MCF 10A (cell line): ENCODE measurements at regions of chr5 and their contacts with region 1.

Region 1: DNA sequence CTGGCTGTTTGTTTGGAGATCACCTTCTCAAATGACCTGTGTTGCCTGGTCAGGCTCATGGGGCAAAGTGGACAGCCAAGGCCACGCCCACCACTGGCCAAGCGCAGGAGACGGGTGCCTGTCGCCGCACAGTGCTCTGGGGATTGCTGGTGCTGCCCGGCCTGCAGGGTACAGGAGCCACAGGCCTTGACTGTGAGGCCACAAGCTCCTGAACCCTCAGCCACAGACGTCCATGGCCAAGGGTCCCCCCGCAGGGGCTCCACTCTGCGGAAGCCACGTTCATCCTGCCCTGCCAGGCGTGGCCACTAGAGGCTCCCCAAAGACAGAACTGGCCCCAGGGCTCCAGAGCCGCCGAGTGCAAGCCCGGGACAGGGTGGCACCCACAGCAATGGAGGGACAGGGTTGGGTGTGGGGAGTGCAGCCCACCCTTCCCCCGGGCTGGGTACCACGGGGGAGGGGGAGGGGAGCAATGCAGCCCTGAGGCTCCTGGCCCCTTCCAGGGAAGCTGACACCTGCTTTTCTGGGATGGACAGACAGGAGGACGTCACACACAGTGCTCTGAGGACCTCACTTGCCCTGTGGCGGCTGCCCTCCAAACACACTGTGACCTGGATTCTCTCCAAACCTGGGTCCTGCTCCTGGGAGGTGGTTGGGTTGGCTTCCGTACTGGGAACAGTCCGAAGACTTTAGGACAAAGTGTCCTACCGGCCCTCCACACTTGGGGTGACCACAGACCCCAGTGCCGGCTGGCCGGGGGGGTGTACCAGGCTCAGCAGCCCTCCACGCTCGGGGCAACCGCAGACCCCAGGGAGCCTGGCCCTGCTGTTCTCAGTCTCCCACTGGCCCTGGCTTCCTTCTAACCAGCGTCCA is 21.5 kb downstream of the TPPP start:
- DNase-seq: peak; percentile 67
- H3K4me3 Mint-ChIP-seq: no peak overlapping the region
- H3K27ac Mint-ChIP-seq: no peak overlapping the region
- H3K4me1 Mint-ChIP-seq: peaks cover 13% of the 10 kb centered on the region
- H3K27me3 Mint-ChIP-seq: no peaks in the 10 kb centered on the region
- CTCF ChIP-seq: peak; percentile 95

Region 2: DNA sequence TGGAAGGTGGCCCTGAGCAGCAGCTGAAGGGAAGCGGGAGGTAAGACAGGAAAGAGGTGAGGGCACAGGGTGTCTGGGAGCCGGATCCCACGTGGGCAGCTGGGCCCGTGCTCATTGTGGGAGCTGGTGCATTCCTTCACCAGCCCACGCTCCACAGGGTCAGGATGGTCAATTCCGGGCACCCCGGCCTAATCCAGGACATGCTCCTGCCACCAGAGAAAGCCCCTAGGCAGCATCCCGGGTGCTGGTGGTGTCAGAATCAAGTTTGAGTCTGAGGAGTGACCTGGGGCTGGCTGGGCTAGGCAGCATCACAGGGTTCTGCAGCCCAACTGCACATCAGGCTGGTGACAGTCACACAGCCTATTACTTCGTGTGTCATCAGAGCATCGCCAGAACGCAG is 407.3 kb before region 1 on chr5:
- CTCF ChIA-PET with region 1: no interaction called
- POLR2A ChIA-PET with region 1: no interaction called
- intact Hi-C with region 1: no loop called
- DNase-seq: no peak
- H3K4me3 Mint-ChIP-seq: no peak overlapping the region
- H3K27ac Mint-ChIP-seq: peak overlapping the region; percentile 89
- H3K4me1 Mint-ChIP-seq: peaks cover 10% of the 10 kb centered on the region
- H3K27me3 Mint-ChIP-seq: no peaks in the 10 kb centered on the region
- CTCF ChIP-seq: no peak

Region 3: DNA sequence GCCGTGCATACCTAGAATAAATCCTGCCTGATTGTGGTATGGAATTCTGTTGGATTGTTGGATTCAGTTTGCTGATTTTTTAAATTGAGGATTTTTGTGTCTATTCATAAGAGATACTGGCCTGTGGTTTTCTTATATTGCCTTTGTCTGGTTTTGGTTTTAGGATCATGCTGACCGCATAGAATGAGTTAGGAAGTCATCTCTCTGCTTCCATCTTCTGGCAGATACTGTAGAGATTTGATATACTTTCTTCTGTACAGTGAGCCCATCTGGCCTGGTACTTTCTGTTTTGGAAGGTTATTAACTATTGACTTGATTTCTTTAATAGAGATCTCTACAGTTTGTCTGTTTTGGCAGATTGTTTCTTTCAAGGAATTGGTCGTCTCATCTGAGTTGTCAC is 44.8 kb before region 1 on chr5:
- CTCF ChIA-PET with region 1: no interaction called
- POLR2A ChIA-PET with region 1: no interaction called
- intact Hi-C with region 1: no loop called
- DNase-seq: no peak
- H3K4me3 Mint-ChIP-seq: no peak overlapping the region
- H3K27ac Mint-ChIP-seq: no peak overlapping the region
- H3K4me1 Mint-ChIP-seq: no peaks in the 10 kb centered on the region
- H3K27me3 Mint-ChIP-seq: no peaks in the 10 kb centered on the region
- CTCF ChIP-seq: no peak

Region 4: GRCh38 chr5:657570-657969 is 14.1 kb before region 1 on chr5:
- CTCF ChIA-PET with region 1: interaction called, 10 read pairs
- POLR2A ChIA-PET with region 1: no interaction called
- intact Hi-C with region 1: no loop called
- DNase-seq: peak; percentile 84
- H3K4me3 Mint-ChIP-seq: no peak overlapping the region
- H3K27ac Mint-ChIP-seq: peak overlapping the region; percentile 69
- H3K4me1 Mint-ChIP-seq: peaks cover 9% of the 10 kb centered on the region
- H3K27me3 Mint-ChIP-seq: no peaks in the 10 kb centered on the region
- CTCF ChIP-seq: no peak

Region 5: GRCh38 chr5:849651-850301 is 178.1 kb after region 1 on chr5:
- CTCF ChIA-PET with region 1: no interaction called
- POLR2A ChIA-PET with region 1: interaction called, 4 read pairs
- intact Hi-C with region 1: loop called (anchors 10 kb)
- DNase-seq: no peak
- H3K4me3 Mint-ChIP-seq: no peak overlapping the region
- H3K27ac Mint-ChIP-seq: no peak overlapping the region
- H3K4me1 Mint-ChIP-seq: no peaks in the 10 kb centered on the region
- H3K27me3 Mint-ChIP-seq: peaks cover 31% of the 10 kb centered on the region
- CTCF ChIP-seq: no peak

Region 6: GRCh38 chr5:902129-902916 is 230.6 kb after region 1 on chr5:
- CTCF ChIA-PET with region 1: interaction called, 63 read pairs
- POLR2A ChIA-PET with region 1: interaction called, 4 read pairs
- intact Hi-C with region 1: loop called (anchors 2 kb)
- DNase-seq: no peak
- H3K4me3 Mint-ChIP-seq: no peak overlapping the region
- H3K27ac Mint-ChIP-seq: peak overlapping the region; percentile 8
- H3K4me1 Mint-ChIP-seq: no peaks in the 10 kb centered on the region
- H3K27me3 Mint-ChIP-seq: no peaks in the 10 kb centered on the region
- CTCF ChIP-seq: no peak

Region 7: DNA sequence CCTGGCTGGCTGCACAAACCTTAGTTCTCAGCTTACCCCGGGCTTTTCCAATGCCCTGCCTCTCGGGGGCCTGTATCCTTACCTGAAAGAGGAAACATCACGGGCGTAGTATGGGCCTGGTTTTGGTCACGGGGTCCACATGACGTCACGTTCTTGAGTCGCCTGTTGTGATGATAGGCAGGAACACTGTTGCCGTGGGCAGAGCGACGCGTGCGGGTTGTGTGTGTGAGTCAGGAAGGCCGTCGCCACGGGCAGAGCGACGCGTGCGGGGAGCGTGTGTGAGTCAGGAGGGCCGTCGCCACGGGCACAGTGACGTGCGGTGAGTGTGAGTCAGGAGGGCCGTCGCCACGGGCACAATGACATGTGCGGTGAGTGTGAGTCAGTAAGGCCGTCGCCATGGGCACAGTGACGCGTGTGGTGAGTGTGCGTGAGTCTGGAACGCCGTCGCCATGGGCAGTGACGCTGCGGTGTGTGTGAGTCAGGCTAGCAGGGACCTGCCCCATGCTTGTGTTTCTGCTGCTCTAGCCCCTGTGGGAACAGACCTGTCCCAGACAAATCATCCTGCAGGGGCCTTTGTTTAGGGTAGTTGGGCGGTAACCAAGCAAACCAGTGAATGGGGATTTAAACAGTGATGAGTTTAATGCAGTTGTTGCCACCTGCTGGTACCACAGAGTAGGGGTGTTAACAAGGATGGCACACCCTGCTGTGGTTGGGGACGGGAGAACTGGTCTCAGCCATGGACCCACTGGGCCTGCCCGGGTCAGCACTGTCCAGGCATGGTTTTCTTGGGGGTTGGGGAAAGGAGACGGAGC is 240.8 kb after region 1 on chr5:
- CTCF ChIA-PET with region 1: interaction called, 21 read pairs
- POLR2A ChIA-PET with region 1: no interaction called
- intact Hi-C with region 1: no loop called
- DNase-seq: peak; percentile 97
- H3K4me3 Mint-ChIP-seq: peak overlapping the region; percentile 61
- H3K27ac Mint-ChIP-seq: peak overlapping the region; percentile 99
- H3K4me1 Mint-ChIP-seq: peaks cover 43% of the 10 kb centered on the region
- H3K27me3 Mint-ChIP-seq: no peaks in the 10 kb centered on the region
- CTCF ChIP-seq: peak; percentile 37

Region 8: DNA sequence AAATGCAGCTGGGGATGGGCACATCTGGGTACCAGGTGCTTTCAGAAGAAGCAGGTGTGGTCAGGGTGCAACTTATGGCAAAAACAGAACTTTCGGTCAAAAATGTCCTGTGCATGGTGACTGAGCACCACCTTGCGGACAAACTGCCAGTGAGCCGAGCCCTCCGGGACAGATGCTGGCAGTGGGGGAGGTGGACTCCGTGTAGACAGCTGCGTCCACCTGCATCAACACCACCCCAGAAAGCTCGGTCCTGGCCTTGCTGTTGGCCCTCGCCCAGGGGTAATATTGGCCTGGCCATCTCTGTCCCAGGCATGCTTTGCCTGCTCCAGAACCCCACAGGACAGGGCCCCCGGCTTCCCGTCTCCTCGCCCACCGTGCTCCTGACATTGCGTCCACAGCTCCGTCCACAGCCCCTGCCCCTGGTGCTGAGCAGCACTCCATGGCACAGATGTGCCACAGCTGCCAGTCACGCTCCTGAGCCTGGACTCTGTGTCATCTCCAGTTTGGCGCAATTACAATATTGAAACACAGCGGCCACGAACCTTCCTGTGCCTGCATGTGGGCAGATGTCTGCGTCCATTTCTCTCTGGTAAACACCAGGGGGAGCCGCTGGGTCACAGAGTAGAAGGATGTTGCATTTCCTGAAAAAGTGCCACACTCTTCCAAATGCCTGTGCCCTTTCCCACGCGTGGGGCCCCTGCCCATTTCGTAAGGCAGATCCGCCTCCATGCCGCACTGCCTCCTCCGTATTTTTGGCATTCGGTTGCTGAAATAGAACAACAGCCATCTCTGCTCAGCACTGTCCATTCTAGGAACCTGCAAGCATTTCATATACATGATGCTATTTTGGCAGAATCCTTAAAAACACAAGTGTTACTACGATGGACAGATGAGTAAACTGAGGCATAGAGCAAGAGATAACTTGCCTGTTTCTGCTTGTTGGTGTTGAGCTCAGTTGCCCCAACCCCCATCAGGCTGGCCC is 496.3 kb after region 1 on chr5:
- CTCF ChIA-PET with region 1: interaction called, 3 read pairs
- POLR2A ChIA-PET with region 1: no interaction called
- intact Hi-C with region 1: loop called (anchors 5 kb)
- DNase-seq: peak; percentile 75
- H3K4me3 Mint-ChIP-seq: peak overlapping the region; percentile 50
- H3K27ac Mint-ChIP-seq: no peak overlapping the region
- H3K4me1 Mint-ChIP-seq: peaks cover 8% of the 10 kb centered on the region
- H3K27me3 Mint-ChIP-seq: peaks cover 12% of the 10 kb centered on the region
- CTCF ChIP-seq: peak; percentile 75